ENCODE measurements at regions of chrX and their contacts with region 1.

Region 1: GRCh38 chrX:100895365-100896075 is 21.4 kb upstream of the NOX1 start:
- DNase-seq: peak; percentile 44
- ATAC-seq: peak; percentile 54
- H3K4me3 ChIP-seq: no peak overlapping the region
- H3K27ac ChIP-seq: no peak overlapping the region
- H3K4me1 ChIP-seq: no peaks in the 10 kb centered on the region
- H3K27me3 ChIP-seq: no peaks in the 10 kb centered on the region; the same call in 1 of the 2 replicates
- CTCF ChIP-seq: peak; percentile 59
- POLR2A ChIP-seq: no peak
- RAD21 ChIP-seq: peak; percentile 68

Region 2: DNA sequence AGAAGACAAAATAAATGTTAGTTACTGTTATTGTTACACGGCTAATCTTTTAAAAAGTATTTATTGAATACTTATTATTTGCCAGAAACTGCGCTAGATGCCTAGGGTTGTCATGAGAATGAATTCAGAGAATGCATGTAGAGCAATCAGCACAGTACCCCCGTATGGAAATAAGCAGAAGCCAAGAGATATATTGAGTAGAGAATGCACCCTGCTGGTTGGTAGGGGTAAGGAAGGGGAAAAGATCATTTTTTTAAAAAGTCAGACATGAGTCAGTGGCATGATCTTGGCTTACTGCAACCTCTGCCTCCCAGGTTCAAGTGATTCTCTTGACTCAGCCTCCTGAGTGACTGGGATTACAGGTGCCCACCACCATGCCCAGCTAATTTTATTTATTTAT is 311.0 kb after region 1 on chrX:
- CTCF ChIA-PET with region 1: no interaction called
- POLR2A ChIA-PET with region 1: no interaction called
- dilution Hi-C with region 1: no loop called
- in situ Hi-C with region 1: no loop called
- intact Hi-C with region 1: loop called (anchors 1 kb)
- DNase-seq: peak; percentile 58
- ATAC-seq: peak; percentile 77
- H3K4me3 ChIP-seq: no peak overlapping the region
- H3K27ac ChIP-seq: no peak overlapping the region
- H3K4me1 ChIP-seq: peaks cover 7% of the 10 kb centered on the region
- H3K27me3 ChIP-seq: no peaks in the 10 kb centered on the region
- CTCF ChIP-seq: peak; percentile 62
- POLR2A ChIP-seq: no peak
- RAD21 ChIP-seq: peak; percentile 71

Region 3: DNA sequence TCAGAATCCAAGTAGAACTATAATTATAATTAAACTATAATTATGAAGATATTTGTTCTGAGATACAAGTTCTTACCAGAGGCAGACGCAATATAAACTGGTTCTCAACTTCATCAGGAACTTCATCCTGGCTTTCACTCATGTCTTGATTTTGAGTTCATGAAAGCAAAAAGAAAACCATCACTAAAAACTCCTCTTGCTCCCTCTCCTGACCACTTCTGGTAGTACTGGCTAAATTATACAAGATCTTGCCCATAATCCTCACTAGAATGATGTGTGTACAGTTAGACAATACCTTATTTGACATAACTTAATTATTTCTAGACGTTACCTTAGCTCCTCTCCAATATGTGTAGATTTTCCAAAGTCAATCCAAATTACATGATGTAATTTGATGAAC is 391.9 kb after region 1 on chrX:
- CTCF ChIA-PET with region 1: no interaction called
- POLR2A ChIA-PET with region 1: no interaction called
- dilution Hi-C with region 1: no loop called
- in situ Hi-C with region 1: loop called (anchors 10 kb)
- intact Hi-C with region 1: loop called (anchors 1 kb)
- DNase-seq: peak; percentile 52
- ATAC-seq: peak; percentile 74
- H3K4me3 ChIP-seq: no peak overlapping the region
- H3K27ac ChIP-seq: no peak overlapping the region
- H3K4me1 ChIP-seq: no peaks in the 10 kb centered on the region
- H3K27me3 ChIP-seq: no peaks in the 10 kb centered on the region
- CTCF ChIP-seq: peak; percentile 62
- POLR2A ChIP-seq: no peak
- RAD21 ChIP-seq: peak; percentile 65

Measured in IMR-90 (cell line).